GM12878 (cell line): ENCODE measurements at regions of chr6 and their contacts with region 1.

Region 1: DNA sequence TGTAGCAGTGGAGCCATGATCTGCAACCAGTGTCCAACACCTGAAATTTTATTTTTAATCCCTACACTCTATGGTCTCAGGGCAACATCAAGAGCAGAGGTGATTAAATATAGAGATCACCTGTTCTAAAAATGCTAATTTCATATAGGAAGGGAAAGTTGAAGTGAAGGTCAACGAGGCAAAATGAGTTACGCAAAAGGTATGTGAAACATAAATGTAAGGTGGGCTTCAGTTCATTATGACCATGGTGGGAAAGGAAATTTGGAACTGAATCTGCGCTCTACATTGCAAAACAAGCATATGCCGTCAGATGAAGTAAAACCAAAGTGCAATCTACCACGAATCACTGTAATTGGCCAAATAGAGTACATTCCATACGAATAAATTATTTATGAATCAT is 35.2 kb upstream of the STMND1 start:
- DNase-seq: no peak
- ATAC-seq: no peak
- H3K4me3 ChIP-seq: no peak overlapping the region
- H3K27ac ChIP-seq: no peak overlapping the region
- H3K4me1 ChIP-seq: no peaks in the 10 kb centered on the region
- H3K27me3 ChIP-seq: no peaks in the 10 kb centered on the region
- CTCF ChIP-seq: no peak
- EP300 ChIP-seq: no peak
- POLR2A ChIP-seq: no peak
- RAD21 ChIP-seq: no peak

Region 2: GRCh38 chr6:16602035-16602434 is 464.6 kb before region 1 on chr6:
- CTCF ChIA-PET with region 1: no interaction called
- POLR2A ChIA-PET with region 1: no interaction called
- RAD21 ChIA-PET with region 1: no interaction called
- SMC1A ChIA-PET with region 1: no interaction called
- in situ Hi-C with region 1: no loop called
- intact Hi-C with region 1: no loop called
- DNase-seq: peak; percentile 53
- ATAC-seq: peak; percentile 94
- H3K4me3 ChIP-seq: no peak overlapping the region
- H3K27ac ChIP-seq: no peak overlapping the region
- H3K4me1 ChIP-seq: peaks cover 32% of the 10 kb centered on the region
- H3K27me3 ChIP-seq: no peaks in the 10 kb centered on the region
- CTCF ChIP-seq: no peak
- EP300 ChIP-seq: peak; percentile 34 to 69; a peak in 2 of 4 replicates
- POLR2A ChIP-seq: no peak
- RAD21 ChIP-seq: no peak

Region 3: GRCh38 chr6:16985513-16986284 is 80.9 kb before region 1 on chr6:
- CTCF ChIA-PET with region 1: no interaction called
- POLR2A ChIA-PET with region 1: no interaction called
- RAD21 ChIA-PET with region 1: no interaction called
- SMC1A ChIA-PET with region 1: no interaction called
- in situ Hi-C with region 1: no loop called
- intact Hi-C with region 1: loop called (anchors 2 kb)
- DNase-seq: no peak
- ATAC-seq: no peak
- H3K4me3 ChIP-seq: no peak overlapping the region
- H3K27ac ChIP-seq: no peak overlapping the region
- H3K4me1 ChIP-seq: no peaks in the 10 kb centered on the region
- H3K27me3 ChIP-seq: peaks cover 0 to 4% of the 10 kb centered on the region in 2 experiments; a peak in 2 of 4 replicates
- CTCF ChIP-seq: no peak
- EP300 ChIP-seq: no peak
- POLR2A ChIP-seq: no peak
- RAD21 ChIP-seq: no peak

Region 4: GRCh38 chr6:17688481-17688880 is 621.9 kb after region 1 on chr6:
- CTCF ChIA-PET with region 1: no interaction called
- POLR2A ChIA-PET with region 1: no interaction called
- RAD21 ChIA-PET with region 1: no interaction called
- SMC1A ChIA-PET with region 1: no interaction called
- in situ Hi-C with region 1: no loop called
- intact Hi-C with region 1: no loop called
- DNase-seq: no peak
- ATAC-seq: no peak
- H3K4me3 ChIP-seq: no peak overlapping the region
- H3K27ac ChIP-seq: no peak overlapping the region
- H3K4me1 ChIP-seq: no peaks in the 10 kb centered on the region
- H3K27me3 ChIP-seq: no peaks in the 10 kb centered on the region
- CTCF ChIP-seq: no peak
- EP300 ChIP-seq: no peak
- POLR2A ChIP-seq: no peak
- RAD21 ChIP-seq: no peak